ENCODE measurements at regions of chr9 and their contacts with region 1.

Region 1: GRCh38 chr9:85610074-85610860 is 131.5 kb downstream of the AGTPBP1 start:
- DNase-seq: peak in 1 of 2 donors; percentile 57
- ATAC-seq: peak in 7 of 8 donors; percentile 70 to 93 (median 79)
- H3K4me3 ChIP-seq: peak overlapping the region in 4 of 10 donors; percentile 13 to 36 (median 26)
- H3K27ac ChIP-seq: peak overlapping the region in 3 of 10 donors; percentile 8 to 49 (median 48)
- H3K4me1 ChIP-seq: peaks cover 0 to 12% (median 0%) of the 10 kb centered on the region in 9 donors
- H3K27me3 ChIP-seq: no peaks in the 10 kb centered on the region
- CTCF ChIP-seq: peak; percentile 60 to 91 (median 81)

Region 2: GRCh38 chr9:84397151-84397728 is 1213.0 kb before region 1 on chr9:
- intact Hi-C with region 1: loop called (anchors 2 to 10 kb)
- DNase-seq: peak; percentile 31 to 53
- ATAC-seq: peak; percentile 71 to 85 (median 76)
- H3K4me3 ChIP-seq: no peak overlapping the region
- H3K27ac ChIP-seq: no peak overlapping the region
- H3K4me1 ChIP-seq: peaks cover 0 to 8% (median 0%) of the 10 kb centered on the region in 9 donors
- H3K27me3 ChIP-seq: peaks cover 0 to 32% (median 10%) of the 10 kb centered on the region in 7 donors
- CTCF ChIP-seq: peak; percentile 82 to 98 (median 96)

Region 3: GRCh38 chr9:84404095-84404686 is 1206.1 kb before region 1 on chr9:
- intact Hi-C with region 1: loop called in 7 of 10 experiments (anchors 5 to 10 kb)
- DNase-seq: no peak
- ATAC-seq: no peak
- H3K4me3 ChIP-seq: no peak overlapping the region
- H3K27ac ChIP-seq: no peak overlapping the region
- H3K4me1 ChIP-seq: no peaks in the 10 kb centered on the region
- H3K27me3 ChIP-seq: peaks cover 0 to 4% (median 0%) of the 10 kb centered on the region in 7 donors
- CTCF ChIP-seq: peak; percentile 33 to 69 (median 58)

Region 4: DNA sequence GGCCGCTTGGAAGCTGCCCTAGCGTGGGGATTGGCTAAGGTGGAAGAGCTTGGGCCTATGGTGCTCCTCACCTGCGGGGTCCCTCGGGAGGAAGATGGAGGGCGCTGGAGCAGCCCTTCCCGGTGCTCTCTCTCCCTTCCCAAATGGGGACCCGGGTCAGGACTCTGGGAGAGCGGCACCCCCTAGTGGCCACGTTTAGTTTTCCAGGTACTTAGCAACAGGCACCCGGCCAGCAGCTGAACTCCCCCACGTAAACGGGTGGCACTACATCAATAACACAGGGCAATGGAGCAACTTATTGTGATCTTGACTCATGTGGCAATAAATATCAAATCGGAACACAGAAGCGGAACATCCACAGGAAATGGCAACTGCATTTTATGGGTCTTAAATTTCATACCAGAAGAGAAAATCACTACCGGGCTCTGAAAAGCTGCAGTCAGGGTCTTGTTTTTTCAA is 185.1 kb before region 1 on chr9:
- intact Hi-C with region 1: loop called in 1 of 10 experiments (anchors 5 kb)
- DNase-seq: peak; percentile 41 to 47
- ATAC-seq: peak in 6 of 8 donors; percentile 17 to 76 (median 51)
- H3K4me3 ChIP-seq: no peak overlapping the region
- H3K27ac ChIP-seq: no peak overlapping the region
- H3K4me1 ChIP-seq: peaks cover 0 to 10% (median 0%) of the 10 kb centered on the region in 9 donors
- H3K27me3 ChIP-seq: peaks cover 0 to 11% (median 0%) of the 10 kb centered on the region in 7 donors
- CTCF ChIP-seq: peak; percentile 39 to 72 (median 61)

Region 5: GRCh38 chr9:85508616-85509015 is 101.7 kb before region 1 on chr9:
- intact Hi-C with region 1: loop called in 3 of 10 experiments (anchors 5 to 10 kb)
- DNase-seq: no peak
- ATAC-seq: no peak
- H3K4me3 ChIP-seq: no peak overlapping the region
- H3K27ac ChIP-seq: no peak overlapping the region
- H3K4me1 ChIP-seq: peaks cover 0 to 7% (median 0%) of the 10 kb centered on the region in 9 donors
- H3K27me3 ChIP-seq: no peaks in the 10 kb centered on the region
- CTCF ChIP-seq: peak in 4 of 9 donors; percentile 5 to 32 (median 18)

Region 6: DNA sequence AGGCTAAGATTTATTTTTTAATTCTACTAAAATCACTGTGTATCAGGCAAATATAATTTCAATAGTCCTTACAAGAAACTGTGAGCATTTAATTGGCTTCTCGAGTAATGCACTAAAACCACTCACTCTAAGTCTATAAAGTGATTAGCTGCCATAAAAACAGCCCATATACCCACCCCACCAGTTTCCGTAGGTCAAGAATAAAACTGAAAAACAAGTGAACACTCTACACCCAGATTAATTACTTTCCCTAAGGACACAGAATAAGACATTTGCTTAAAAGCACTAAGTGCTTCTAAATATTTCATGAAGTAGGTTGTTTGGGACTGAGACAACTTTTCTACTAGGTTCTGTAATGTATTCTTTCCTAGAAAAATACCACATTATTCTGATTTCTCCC is 62.7 kb before region 1 on chr9:
- intact Hi-C with region 1: no loop called
- DNase-seq: no peak
- ATAC-seq: no peak
- H3K4me3 ChIP-seq: no peak overlapping the region
- H3K27ac ChIP-seq: no peak overlapping the region
- H3K4me1 ChIP-seq: no peaks in the 10 kb centered on the region
- H3K27me3 ChIP-seq: no peaks in the 10 kb centered on the region
- CTCF ChIP-seq: no peak